ENCODE measurements at regions of chr1 and their contacts with region 1.

Region 1: DNA sequence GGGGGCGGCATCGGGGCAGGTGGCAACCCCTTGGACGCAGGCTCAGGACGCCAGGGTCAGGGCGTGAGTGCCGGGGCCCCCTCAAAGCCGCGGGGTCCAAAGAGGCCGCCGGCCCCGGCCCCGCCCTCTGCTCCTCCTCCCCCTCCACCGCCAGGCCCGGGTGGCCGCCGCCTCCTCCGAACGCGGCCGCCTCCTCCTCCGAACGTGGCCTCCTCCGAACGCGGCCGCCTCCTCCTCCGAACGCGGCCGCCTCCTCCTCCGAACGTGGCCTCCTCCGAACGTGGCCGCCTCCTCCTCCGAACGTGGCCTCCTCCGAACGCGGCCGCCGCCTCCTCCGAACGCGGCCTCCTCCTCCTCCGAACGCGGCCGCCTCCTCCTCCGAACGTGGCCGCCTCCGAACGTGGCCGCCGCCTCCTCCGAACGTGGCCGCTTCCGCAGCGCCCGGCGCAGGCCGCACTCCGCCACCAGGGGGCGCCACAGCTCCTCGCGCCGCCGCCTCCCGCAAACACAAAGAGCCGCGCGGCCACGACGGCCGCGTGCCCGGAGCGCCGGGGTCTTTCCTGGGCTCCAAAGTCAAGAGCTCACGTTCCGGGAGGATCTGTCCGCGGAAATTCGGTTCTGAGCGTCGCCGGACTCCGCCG is 19.3 kb upstream of the SAMD11 start:
- DNase-seq: peak; percentile 61 to 97 (median 85)
- ATAC-seq: peak; percentile 91 to 94 (median 92)
- H3K4me3 ChIP-seq: peak overlapping the region; percentile 6 to 47 (median 19)
- H3K27ac ChIP-seq: no peak overlapping the region
- H3K4me1 ChIP-seq: no peaks in the 10 kb centered on the region
- H3K27me3 ChIP-seq: no peaks in the 10 kb centered on the region
- CTCF ChIP-seq: peak; percentile 94 to 98 (median 97)

Region 2: GRCh38 chr1:970242-970972 is 66.0 kb after region 1 on chr1:
- intact Hi-C with region 1: loop called in 1 of 3 experiments (anchors 5 kb)
- DNase-seq: peak in 1 of 6 donors; percentile 66
- ATAC-seq: no peak
- H3K4me3 ChIP-seq: no peak overlapping the region
- H3K27ac ChIP-seq: no peak overlapping the region
- H3K4me1 ChIP-seq: peaks cover 0 to 9% (median 0%) of the 10 kb centered on the region in 3 donors
- H3K27me3 ChIP-seq: peaks cover 0 to 17% (median 3%) of the 10 kb centered on the region in 4 donors
- CTCF ChIP-seq: no peak

Region 3: GRCh38 chr1:1157033-1157365 is 252.6 kb after region 1 on chr1:
- intact Hi-C with region 1: no loop called
- DNase-seq: peak in 3 of 6 donors; percentile 40 to 61 (median 48)
- ATAC-seq: no peak
- H3K4me3 ChIP-seq: no peak overlapping the region
- H3K27ac ChIP-seq: no peak overlapping the region
- H3K4me1 ChIP-seq: peaks cover 6 to 9% (median 6%) of the 10 kb centered on the region in 3 donors
- H3K27me3 ChIP-seq: no peaks in the 10 kb centered on the region
- CTCF ChIP-seq: no peak

Region 4: GRCh38 chr1:1264868-1265272 is 360.4 kb after region 1 on chr1:
- intact Hi-C with region 1: no loop called
- DNase-seq: no peak
- ATAC-seq: no peak
- H3K4me3 ChIP-seq: no peak overlapping the region
- H3K27ac ChIP-seq: no peak overlapping the region
- H3K4me1 ChIP-seq: no peaks in the 10 kb centered on the region
- H3K27me3 ChIP-seq: no peaks in the 10 kb centered on the region
- CTCF ChIP-seq: no peak

Measured in pancreas (tissue), 10 donors.